ENCODE measurements at regions of chr18 and their contacts with region 1.

Region 1: DNA sequence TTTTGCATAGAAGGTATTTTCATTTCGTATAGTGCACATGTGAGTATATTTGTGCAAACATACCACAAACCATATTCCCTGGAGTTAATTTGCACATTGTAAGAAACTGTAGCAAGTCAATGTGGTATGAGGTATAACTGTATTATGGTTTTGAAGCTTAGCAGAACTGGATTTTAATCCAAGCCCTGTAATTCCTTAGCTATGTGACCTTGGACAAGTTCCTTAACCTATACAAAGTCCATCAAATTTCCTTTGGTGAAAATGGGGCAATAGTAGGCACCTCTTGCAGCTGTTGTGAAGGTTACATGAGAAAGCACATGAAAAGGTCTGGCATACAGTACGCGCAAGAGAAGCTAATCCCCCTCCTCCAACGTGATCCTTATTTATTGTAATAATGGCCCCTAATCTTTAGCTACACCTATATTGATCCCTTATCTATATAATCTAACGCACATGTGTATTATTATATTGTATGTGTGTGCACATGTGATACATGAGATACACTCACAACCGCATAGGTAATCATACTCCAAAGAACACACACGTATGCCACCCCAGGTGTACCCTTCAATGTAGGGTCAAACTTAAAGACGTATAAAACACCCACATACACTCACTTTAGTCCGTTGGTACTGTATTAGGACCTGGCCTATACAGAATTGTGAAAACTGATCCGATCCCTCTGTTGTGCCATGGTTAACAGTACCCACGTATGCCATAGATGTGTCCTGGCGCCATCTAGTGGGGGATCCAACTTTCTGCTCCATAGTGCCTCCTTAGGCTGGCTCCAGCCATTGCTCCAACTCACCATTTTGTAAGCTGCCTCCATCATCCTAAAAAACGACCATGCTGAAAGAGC is 402.9 kb upstream of the SLC14A2 start:
- DNase-seq: peak; percentile 93

Region 2: DNA sequence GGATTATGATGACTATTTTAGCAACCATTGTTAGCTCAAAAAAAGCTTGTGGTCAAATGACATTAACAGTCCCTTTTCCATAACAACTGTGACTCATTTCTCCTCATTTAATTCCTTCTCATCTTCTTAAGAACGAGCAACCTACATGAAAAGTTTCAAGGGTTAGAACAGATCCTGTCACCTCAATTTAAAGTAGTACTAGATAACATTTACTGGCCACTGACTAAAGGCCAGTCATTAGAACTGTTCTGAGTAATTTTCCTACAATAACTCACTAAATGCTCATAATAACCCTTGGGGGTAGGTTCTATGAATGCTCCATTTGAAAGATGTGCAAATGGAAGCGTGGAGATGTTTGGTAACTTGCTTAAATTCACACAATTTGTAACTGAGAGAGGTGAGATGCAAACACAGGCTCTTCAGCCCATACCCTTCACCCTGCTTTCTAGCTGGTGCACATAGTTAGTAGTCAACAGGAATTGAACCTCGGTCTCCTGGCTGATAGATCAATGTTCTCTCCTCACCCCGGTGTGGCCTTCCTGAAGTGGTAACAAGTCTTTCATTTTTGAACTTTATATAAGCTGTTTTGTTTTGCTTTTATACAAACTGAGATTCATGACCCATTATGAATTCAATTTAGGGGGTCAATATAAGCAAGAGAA is 319.2 kb before region 1 on chr18:
- intact Hi-C with region 1: loop called in 1 of 2 experiments (anchors 5 kb)
- DNase-seq: no peak

Region 3: GRCh38 chr18:45275367-45276113 is 63.1 kb after region 1 on chr18:
- intact Hi-C with region 1: no loop called
- DNase-seq: no peak

Measured in posterior vena cava (tissue), 2 donors.